ENCODE measurements at regions of chr14 and their contacts with region 1.

Region 1: DNA sequence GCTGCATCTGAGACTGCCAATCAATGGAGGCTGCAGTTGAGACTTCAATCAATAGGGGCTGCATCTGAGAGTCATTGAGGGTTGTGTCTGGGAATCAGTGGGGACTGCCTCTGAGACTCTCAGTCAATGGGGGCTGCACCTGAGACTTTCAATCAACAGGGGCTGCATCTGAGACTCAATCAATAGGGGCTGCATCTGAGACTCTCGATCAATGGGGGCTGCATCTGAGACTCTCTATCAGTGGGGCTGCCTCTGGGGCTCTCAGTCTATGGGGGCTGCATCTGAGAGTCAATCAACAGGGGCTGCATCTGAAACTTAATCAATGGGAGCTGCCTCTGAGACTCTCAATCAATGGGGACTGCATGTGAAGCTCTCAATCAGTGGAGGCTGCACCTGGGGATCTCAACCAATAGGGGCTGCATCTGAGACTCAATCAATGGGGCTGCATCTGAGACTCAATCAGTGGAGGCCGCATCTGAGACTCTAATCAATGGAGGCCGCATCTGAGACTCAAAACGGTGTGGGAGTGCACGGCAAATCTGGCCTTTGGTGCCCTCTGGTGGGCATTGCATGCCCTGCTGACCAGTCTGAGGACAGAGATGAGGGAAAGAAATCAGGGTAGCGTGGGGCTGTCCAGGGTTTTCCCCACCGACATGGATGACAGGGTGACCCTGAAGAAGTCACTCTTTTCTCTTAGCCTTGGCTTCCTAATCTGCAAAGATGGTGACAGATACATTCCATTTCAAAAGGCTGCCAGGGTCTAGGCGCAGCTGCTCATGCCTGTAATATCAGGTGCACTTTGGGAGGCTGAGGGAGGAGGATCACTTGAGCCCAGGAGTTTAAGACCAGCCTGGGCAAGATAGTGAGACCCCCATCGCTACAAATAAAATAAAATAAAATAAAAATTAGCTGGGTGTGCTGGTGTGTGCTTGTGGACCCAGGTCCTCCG is 41.3 kb upstream of the EIF5 start:
- DNase-seq: peak; percentile 71 to 96
- H3K4me3 ChIP-seq: no peak overlapping the region
- CTCF ChIP-seq: peak in 1 of 3 donors; percentile 40
- POLR2A ChIP-seq: no peak

Region 2: DNA sequence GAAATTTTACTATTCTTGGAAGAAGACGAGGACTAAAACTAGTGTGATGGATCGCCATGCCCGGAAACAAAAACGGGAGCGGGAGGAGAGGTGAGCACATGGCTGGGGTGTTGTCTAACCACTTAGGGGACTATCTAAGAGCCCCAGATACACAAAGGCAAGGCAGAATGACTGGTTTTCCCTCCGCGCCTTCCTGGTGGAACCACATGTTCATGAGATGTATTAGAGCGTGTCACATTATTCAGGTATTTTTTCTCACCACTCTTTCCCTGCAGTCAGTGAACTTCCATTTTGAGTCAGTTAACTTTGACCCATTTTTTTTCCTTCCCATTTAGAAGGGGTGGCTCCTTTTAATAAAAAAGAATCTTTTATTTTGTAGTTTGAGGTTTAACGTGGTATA is 584.2 kb before region 1 on chr14:
- intact Hi-C with region 1: loop called (anchors 10 kb)
- DNase-seq: no peak
- H3K4me3 ChIP-seq: no peak overlapping the region
- CTCF ChIP-seq: no peak
- POLR2A ChIP-seq: no peak

Region 3: DNA sequence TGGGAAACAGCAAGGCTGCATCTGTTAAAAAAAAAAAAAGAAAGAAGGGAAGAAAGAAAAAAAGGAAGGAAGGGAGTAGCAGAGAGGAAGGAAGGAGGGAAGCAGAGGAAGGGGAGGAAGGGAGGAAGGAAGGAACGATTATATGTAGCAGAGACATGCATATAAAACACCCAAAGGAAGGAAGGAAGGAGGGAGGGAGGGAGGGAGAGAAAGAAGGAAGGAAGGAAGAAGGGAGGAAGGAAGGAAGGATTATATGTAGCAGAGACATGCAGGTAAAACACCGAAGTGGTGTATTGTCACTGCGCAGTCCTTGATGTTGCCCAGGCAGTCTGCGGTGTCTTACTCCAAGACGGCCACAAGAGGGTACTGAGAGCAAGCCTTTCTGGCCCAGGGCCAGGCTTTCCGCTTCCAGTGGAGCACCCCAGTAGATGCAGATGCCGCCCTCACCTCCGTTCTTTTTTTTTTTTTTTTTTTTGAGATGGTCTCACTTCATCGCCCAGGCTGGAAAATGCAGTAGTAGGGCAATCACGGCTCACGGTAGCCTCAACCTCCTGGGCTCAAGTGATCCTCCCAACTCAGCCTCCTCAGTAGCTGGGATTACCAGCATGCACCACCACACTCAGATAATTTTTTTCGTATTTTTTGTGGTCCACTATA is 214.5 kb before region 1 on chr14:
- intact Hi-C with region 1: no loop called
- DNase-seq: peak in 1 of 2 donors; percentile 72
- H3K4me3 ChIP-seq: no peak overlapping the region
- CTCF ChIP-seq: peak in 1 of 3 donors; percentile 65
- POLR2A ChIP-seq: no peak

Region 4: DNA sequence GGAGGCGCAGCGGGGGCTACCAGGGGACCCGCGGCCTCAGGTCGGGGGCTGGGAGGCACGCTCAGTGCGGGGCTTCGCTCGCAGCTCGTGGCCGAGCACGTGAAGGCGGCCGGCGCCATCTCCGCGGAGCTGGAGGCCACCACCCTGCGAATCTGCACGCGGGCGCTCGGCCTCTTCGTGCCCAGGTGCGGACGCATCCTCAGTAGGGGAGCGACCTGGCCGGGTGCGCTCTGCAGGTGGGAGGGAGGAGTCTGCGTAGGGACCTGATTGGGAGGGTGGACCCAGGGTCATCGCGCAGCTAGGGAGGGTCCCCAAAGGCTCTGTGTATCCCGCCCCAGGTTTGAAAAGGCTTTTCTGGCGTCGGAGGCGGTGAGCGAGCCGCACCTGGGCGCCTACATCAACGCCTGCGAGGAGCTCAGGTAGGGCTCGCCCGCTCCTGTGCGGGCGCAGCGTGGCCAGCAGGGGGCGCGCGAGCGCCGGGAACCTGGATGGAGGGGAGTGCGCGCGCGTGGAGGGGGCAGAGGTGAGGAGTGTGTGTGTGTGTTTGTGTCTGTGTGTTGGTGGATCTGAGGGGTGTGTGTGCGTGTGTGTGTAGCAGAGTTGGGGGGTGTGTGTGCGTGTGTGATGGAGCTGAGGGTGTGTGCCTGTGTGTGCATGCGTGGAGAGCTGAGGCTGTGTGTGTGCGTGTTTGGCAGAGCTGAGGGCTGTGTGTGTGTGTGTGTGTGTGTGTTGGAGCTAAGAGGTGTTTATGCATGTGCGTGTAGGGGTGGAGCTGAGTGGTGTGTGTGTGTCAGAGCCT is 187.8 kb before region 1 on chr14:
- intact Hi-C with region 1: loop called (anchors 5 kb)
- DNase-seq: peak in 1 of 2 donors; percentile 94
- H3K4me3 ChIP-seq: no peak overlapping the region
- CTCF ChIP-seq: peak in 2 of 3 donors; percentile 9 to 98
- POLR2A ChIP-seq: no peak

Region 5: GRCh38 chr14:103315351-103315911 is 22.7 kb after region 1 on chr14:
- intact Hi-C with region 1: no loop called
- DNase-seq: peak in 1 of 2 donors; percentile 21
- H3K4me3 ChIP-seq: no peak overlapping the region
- CTCF ChIP-seq: no peak
- POLR2A ChIP-seq: no peak